ENCODE measurements at regions of chr6 and their contacts with region 1.

Region 1: GRCh38 chr6:67361264-67361663 is 1273.8 kb upstream of the ADGRB3 start:
- DNase-seq: no peak

Region 2: GRCh38 chr6:68709882-68710281 is 1348.6 kb after region 1 on chr6:
- intact Hi-C with region 1: loop called in 1 of 2 experiments (anchors 5 kb)
- DNase-seq: no peak